ENCODE measurements at regions of chr17 and their contacts with region 1.

Region 1: DNA sequence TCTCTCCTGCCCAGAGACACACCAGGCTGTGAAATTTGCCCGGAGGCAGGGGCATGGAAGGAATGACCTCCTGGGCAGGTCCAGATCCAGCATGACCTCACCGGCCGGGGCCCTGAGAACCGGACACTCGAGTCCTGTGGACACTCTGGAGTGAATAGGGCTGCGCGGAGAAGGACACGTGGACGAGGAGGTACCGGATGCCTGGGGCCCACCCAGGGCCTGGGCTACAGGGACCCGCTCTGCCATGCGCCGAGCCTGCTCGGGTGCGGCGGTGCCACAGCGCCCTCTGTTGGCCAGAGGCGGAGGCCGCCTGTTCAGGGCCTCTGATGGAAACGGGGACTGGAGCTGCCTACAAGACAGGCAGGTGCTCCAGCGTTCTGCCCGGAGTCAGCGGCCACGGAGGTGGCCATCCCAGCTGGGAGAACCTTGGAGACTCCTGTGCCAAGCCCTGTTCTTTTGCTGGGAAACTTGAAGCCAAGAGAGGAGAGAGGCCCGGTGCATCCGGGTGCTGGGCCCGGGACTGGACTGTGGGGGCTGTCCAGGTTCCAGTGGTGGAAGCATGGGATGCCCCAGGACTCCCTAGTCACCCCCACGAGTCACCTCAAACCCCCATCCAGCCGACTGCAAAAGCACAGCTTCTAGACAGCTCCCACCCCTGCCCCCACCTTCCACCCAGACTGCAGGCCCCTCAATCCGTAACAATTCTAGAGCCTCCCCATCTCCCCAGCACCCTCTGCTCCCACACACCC is 19.3 kb upstream of the NXPH3 start:
- DNase-seq: peak; percentile 85
- ATAC-seq: peak; percentile 94
- H3K4me3 ChIP-seq: no peak overlapping the region
- H3K4me3 Mint-ChIP-seq: no peak overlapping the region
- H3K27ac ChIP-seq: no peak overlapping the region
- H3K27ac Mint-ChIP-seq: no peak overlapping the region
- H3K4me1 ChIP-seq: peaks cover 0 to 6% of the 10 kb centered on the region in 2 donors
- H3K4me1 Mint-ChIP-seq: peaks cover 1% of the 10 kb centered on the region
- H3K27me3 ChIP-seq: peaks cover 0 to 7% (median 0%) of the 10 kb centered on the region in 4 experiments
- H3K27me3 Mint-ChIP-seq: peaks cover 5% of the 10 kb centered on the region
- CTCF ChIP-seq: peak; percentile 98

Region 2: DNA sequence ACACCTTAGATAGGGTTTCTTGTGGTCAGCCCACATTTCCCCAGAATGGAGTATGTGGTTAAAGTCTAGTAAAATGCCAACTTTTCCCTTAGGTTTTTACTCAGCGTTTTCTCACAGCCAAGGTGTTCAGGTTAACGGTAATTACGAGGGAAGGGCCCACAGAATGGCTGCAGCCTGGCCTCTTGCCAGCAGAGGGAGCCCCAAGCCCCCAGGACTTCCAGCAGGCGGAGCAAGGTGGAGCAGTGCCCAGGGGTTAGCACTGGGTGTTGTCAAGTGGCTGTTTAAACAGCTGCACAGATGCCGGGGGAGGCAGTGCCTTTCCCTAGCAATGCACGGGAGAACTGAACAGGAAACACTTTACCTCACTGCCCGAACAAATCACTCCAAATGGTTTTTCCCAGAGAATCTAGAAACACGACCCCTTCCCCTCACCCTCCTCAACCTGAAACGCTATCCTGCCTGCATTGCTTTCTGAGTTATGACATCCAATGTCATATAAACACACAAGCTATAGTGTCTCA is 148.4 kb before region 1 on chr17:
- CTCF ChIA-PET with region 1: interaction called, 152 read pairs
- POLR2A ChIA-PET with region 1: no interaction called
- intact Hi-C with region 1: loop called (anchors 1 kb)
- DNase-seq: peak; percentile 87
- ATAC-seq: peak; percentile 97
- H3K4me3 ChIP-seq: no peak overlapping the region
- H3K4me3 Mint-ChIP-seq: no peak overlapping the region
- H3K27ac ChIP-seq: no peak overlapping the region
- H3K27ac Mint-ChIP-seq: peak overlapping the region; percentile 28
- H3K4me1 ChIP-seq: peaks cover 24 to 33% of the 10 kb centered on the region in 2 donors
- H3K4me1 Mint-ChIP-seq: peaks cover 28% of the 10 kb centered on the region
- H3K27me3 ChIP-seq: no peaks in the 10 kb centered on the region
- H3K27me3 Mint-ChIP-seq: no peaks in the 10 kb centered on the region
- CTCF ChIP-seq: peak; percentile 99

Region 3: GRCh38 chr17:49425004-49425286 is 131.5 kb before region 1 on chr17:
- CTCF ChIA-PET with region 1: interaction called, 10 read pairs
- POLR2A ChIA-PET with region 1: no interaction called
- intact Hi-C with region 1: no loop called
- DNase-seq: no peak
- ATAC-seq: no peak
- H3K4me3 ChIP-seq: no peak overlapping the region
- H3K4me3 Mint-ChIP-seq: no peak overlapping the region
- H3K27ac ChIP-seq: no peak overlapping the region
- H3K27ac Mint-ChIP-seq: no peak overlapping the region
- H3K4me1 ChIP-seq: no peaks in the 10 kb centered on the region
- H3K4me1 Mint-ChIP-seq: no peaks in the 10 kb centered on the region
- H3K27me3 ChIP-seq: peaks cover 0 to 2% (median 0%) of the 10 kb centered on the region in 4 experiments
- H3K27me3 Mint-ChIP-seq: peaks cover 27% of the 10 kb centered on the region
- CTCF ChIP-seq: no peak

Region 4: DNA sequence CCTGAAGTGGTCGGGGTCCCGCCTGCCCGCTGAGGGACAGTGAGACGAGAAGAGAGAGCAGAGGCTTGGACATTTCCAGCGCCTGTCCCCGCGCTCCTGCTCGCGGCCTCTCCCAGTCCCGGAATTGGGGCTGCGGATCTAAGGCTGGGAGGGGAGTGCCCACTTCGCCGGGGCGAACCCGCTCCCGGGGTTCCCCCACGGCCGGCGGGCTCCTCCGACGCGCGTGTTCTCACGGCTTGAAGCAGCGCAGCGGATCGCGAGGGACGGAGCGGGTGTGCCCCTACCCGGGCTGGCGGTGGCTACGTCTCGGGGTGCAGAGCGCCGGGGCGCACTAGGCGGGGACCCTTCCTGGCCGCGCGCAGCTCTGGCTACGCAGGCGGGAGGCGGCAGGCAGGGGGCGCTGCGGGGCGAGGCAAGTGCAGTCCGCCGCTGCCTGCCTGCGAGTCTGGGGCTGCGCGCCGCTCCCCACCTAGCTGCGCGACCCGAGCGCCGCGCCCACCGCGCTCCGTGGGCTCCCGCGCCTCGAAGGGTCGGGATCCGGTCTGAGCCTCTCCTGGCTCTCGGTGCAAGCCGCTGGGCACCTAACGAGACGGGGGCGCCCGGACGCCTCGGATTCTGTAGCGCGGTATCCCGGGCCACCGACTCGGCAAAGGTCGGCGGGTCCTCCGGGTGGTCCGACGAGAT is 60.1 kb before region 1 on chr17:
- CTCF ChIA-PET with region 1: interaction called, 21 read pairs
- POLR2A ChIA-PET with region 1: interaction called, 4 read pairs
- intact Hi-C with region 1: loop called (anchors 1 kb)
- DNase-seq: peak; percentile 88
- ATAC-seq: peak; percentile 75
- H3K4me3 ChIP-seq: peak overlapping the region in 4 of 5 experiments; percentile 54 to 74 (median 58)
- H3K4me3 Mint-ChIP-seq: peak overlapping the region; percentile 87
- H3K27ac ChIP-seq: no peak overlapping the region
- H3K27ac Mint-ChIP-seq: no peak overlapping the region
- H3K4me1 ChIP-seq: peaks cover 30 to 34% of the 10 kb centered on the region in 2 donors
- H3K4me1 Mint-ChIP-seq: peaks cover 29% of the 10 kb centered on the region
- H3K27me3 ChIP-seq: peaks cover 0 to 53% (median 43%) of the 10 kb centered on the region in 4 experiments
- H3K27me3 Mint-ChIP-seq: peaks cover 41% of the 10 kb centered on the region
- CTCF ChIP-seq: peak; percentile 92

Region 5: DNA sequence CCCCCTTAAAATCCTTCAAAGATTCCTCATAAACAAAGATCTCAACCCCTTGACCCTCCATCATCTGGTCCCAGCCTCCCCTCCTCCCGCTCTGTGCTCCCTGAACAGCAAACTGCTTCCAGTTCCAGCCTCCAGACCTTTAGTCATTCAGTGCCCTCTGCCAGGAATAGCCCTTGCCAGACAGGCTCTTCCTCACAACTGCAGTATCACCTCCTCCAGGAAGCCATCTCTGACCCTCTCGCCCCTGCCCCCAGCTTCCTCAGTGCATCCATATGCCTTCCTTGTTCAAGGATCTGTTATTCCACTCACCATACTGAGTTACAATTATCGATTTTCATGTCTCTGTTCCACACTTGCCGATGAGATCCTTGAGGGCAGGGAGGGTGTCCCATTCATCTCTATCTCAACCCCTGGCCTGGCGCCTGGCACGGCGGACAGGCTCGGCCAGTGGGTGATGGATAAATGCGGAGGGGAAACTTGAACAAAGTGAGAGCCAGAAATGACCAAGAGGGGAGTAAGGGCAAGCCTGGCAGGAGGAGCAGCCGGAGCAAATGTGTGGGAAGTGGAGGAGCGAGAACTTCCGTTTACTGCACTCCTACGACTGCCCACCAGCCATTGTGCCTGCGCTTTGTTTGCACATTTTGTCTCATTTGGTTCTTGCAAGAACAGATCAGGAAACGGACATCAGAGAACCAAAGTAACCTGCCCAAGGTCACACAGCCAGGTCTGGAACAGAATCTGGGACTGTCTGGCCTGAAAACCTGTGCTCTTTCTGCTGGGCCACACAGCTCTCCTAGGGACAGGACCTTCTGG is 17.3 kb after region 1 on chr17:
- CTCF ChIA-PET with region 1: interaction called, 30 read pairs
- POLR2A ChIA-PET with region 1: no interaction called
- intact Hi-C with region 1: no loop called
- DNase-seq: no peak
- ATAC-seq: no peak
- H3K4me3 ChIP-seq: no peak overlapping the region
- H3K4me3 Mint-ChIP-seq: no peak overlapping the region
- H3K27ac ChIP-seq: no peak overlapping the region
- H3K27ac Mint-ChIP-seq: no peak overlapping the region
- H3K4me1 ChIP-seq: peaks cover 21 to 28% of the 10 kb centered on the region in 2 donors
- H3K4me1 Mint-ChIP-seq: peaks cover 23% of the 10 kb centered on the region
- H3K27me3 ChIP-seq: peaks cover 0 to 69% (median 28%) of the 10 kb centered on the region in 4 experiments
- H3K27me3 Mint-ChIP-seq: peaks cover 53% of the 10 kb centered on the region
- CTCF ChIP-seq: no peak

Measured in B cell (primary cell).